B cell (primary cell): ENCODE measurements at regions of chr18 and their contacts with region 1.

Region 1: DNA sequence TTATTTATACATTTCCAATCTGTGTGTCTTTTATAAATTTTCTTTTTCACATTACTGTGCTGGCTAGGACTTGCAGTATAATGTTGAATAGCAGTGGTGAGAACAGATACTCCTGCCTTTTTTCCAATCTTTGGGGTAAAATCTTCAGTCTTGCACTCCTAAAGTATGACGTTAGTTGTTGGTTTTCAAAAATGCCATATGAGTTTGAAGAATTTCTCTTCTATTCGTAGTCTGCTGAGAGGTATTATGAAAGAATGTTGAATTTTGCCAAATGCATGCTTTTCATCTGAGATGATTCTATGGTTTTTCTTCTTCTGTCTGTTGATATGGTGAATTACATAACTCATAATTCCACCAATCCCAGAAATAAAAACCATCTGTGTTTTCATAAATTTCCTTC is 335.3 kb upstream of the CHST9 start:
- DNase-seq: no peak
- ATAC-seq: no peak
- H3K4me3 ChIP-seq: no peak overlapping the region
- H3K4me3 Mint-ChIP-seq: no peak overlapping the region
- H3K27ac ChIP-seq: no peak overlapping the region
- H3K27ac Mint-ChIP-seq: no peak overlapping the region
- H3K4me1 ChIP-seq: no peaks in the 10 kb centered on the region
- H3K4me1 Mint-ChIP-seq: no peaks in the 10 kb centered on the region
- H3K27me3 ChIP-seq: no peaks in the 10 kb centered on the region
- H3K27me3 Mint-ChIP-seq: no peaks in the 10 kb centered on the region
- CTCF ChIP-seq: no peak

Region 2: DNA sequence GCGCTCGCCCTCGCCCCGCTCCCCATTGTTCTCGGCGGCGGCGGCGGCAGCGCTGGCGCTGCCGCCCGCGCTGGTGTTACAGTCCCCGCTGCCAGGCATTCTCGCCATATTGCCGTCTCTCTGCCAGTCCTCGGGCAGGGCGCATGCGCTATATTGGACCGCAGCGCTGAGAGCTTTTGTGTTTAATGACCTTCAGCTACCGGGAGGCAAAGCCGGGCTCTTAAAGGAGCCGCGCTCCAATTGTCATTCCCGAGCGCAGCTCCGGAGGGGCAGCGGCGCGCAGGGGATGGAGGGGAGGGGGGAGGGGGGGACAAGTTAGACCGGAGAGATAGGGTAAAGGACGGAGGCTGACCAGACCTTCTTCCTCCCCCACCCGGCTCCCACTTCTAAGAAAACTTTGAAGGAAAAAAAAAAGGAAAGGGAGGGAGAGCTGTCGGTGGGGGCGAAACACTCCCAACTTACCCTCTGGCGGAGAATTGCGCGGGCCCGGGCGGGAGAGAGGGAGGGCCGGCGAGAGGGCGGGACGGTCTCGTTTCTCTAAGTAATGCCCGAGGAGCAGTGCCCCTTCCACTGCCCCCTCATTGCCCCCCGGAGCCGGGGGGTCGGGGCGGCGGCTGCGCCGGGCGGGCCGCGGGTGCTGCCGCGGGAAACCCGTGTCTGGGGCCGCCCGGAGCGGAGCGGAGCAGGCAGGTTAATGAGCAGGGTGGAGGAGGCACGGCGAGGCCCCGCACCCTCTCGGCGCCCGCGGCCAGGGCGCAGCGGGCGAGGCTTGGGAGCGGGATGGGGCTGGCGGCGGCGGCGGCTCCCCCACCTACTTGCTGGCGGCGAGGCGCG is 971.8 kb before region 1 on chr18 and contains the start of gene KCTD1:
- CTCF ChIA-PET with region 1: no interaction called
- POLR2A ChIA-PET with region 1: no interaction called
- intact Hi-C with region 1: no loop called
- DNase-seq: peak; percentile 71
- ATAC-seq: peak; percentile 70
- H3K4me3 ChIP-seq: peak within 1 kb of the TSS; percentile 25 to 71 (median 58)
- H3K4me3 Mint-ChIP-seq: peak within 1 kb of the TSS; percentile 89
- H3K27ac ChIP-seq: no peak within 1 kb of the TSS
- H3K27ac Mint-ChIP-seq: peak within 1 kb of the TSS; percentile 67
- H3K4me1 ChIP-seq: peaks cover 26 to 31% of the 10 kb centered on the region in 2 donors
- H3K4me1 Mint-ChIP-seq: peaks cover 39% of the 10 kb centered on the region
- H3K27me3 ChIP-seq: peaks cover 0 to 40% (median 30%) of the 10 kb centered on the region in 4 experiments
- H3K27me3 Mint-ChIP-seq: peaks cover 32% of the 10 kb centered on the region
- CTCF ChIP-seq: no peak
- total RNA-seq, gene KCTD1: 4.1 and 5.0 TPM in 2 replicates

Region 3: GRCh38 chr18:27461957-27462356 is 58.4 kb before region 1 on chr18:
- CTCF ChIA-PET with region 1: no interaction called
- POLR2A ChIA-PET with region 1: no interaction called
- intact Hi-C with region 1: loop called (anchors 10 kb)
- DNase-seq: no peak
- ATAC-seq: no peak
- H3K4me3 ChIP-seq: no peak overlapping the region
- H3K4me3 Mint-ChIP-seq: no peak overlapping the region
- H3K27ac ChIP-seq: no peak overlapping the region
- H3K27ac Mint-ChIP-seq: no peak overlapping the region
- H3K4me1 ChIP-seq: no peaks in the 10 kb centered on the region
- H3K4me1 Mint-ChIP-seq: no peaks in the 10 kb centered on the region
- H3K27me3 ChIP-seq: no peaks in the 10 kb centered on the region
- H3K27me3 Mint-ChIP-seq: no peaks in the 10 kb centered on the region
- CTCF ChIP-seq: no peak

Region 4: GRCh38 chr18:27491772-27492171 is 28.6 kb before region 1 on chr18:
- CTCF ChIA-PET with region 1: no interaction called
- POLR2A ChIA-PET with region 1: no interaction called
- intact Hi-C with region 1: no loop called
- DNase-seq: no peak
- ATAC-seq: no peak
- H3K4me3 ChIP-seq: no peak overlapping the region
- H3K4me3 Mint-ChIP-seq: no peak overlapping the region
- H3K27ac ChIP-seq: no peak overlapping the region
- H3K27ac Mint-ChIP-seq: no peak overlapping the region
- H3K4me1 ChIP-seq: no peaks in the 10 kb centered on the region
- H3K4me1 Mint-ChIP-seq: no peaks in the 10 kb centered on the region
- H3K27me3 ChIP-seq: no peaks in the 10 kb centered on the region
- H3K27me3 Mint-ChIP-seq: no peaks in the 10 kb centered on the region
- CTCF ChIP-seq: no peak